Vagina (tissue), 2 donors: ENCODE measurements at regions of chr16 and their contacts with region 1.

Region 1: DNA sequence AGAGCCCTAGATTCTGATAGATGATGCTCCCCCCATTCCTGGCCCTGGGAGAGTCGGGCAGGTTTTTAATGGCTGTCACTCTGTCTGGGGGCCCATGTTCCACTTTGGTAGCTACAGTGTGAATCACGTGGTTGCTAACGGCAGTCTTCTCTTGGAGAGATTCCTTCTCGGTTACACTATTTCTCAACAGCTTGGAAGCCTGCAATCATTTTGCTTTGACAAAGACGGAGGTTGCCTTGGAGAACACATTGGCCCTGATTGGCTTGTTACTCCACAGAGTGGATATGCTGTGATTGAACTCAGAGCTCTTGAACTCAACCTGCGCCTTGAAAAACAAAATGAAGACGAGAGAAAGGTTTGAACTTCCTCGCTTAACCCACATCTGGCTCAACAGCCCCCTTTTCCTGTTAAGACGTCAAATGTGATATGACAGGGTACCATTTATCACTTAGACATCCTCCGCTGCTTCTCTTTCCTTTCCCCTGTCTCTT is 218.9 kb downstream of the MAF start:
- DNase-seq: no peak
- H3K4me3 ChIP-seq: no peak overlapping the region
- H3K27ac ChIP-seq: no peak overlapping the region
- H3K4me1 ChIP-seq: peaks cover 8% of the 10 kb centered on the region
- H3K27me3 ChIP-seq: no peaks in the 10 kb centered on the region
- CTCF ChIP-seq: no peak
- POLR2A ChIP-seq: no peak

Region 2: GRCh38 chr16:78967948-78968347 is 413.6 kb before region 1 on chr16:
- intact Hi-C with region 1: loop called (anchors 5 kb)
- DNase-seq: no peak
- H3K4me3 ChIP-seq: no peak overlapping the region
- H3K27ac ChIP-seq: no peak overlapping the region
- H3K4me1 ChIP-seq: no peaks in the 10 kb centered on the region
- H3K27me3 ChIP-seq: no peaks in the 10 kb centered on the region
- CTCF ChIP-seq: no peak
- POLR2A ChIP-seq: no peak